Heart right ventricle (tissue), 16 donors: ENCODE measurements at regions of chr6 and their contacts with region 1.

Region 1: DNA sequence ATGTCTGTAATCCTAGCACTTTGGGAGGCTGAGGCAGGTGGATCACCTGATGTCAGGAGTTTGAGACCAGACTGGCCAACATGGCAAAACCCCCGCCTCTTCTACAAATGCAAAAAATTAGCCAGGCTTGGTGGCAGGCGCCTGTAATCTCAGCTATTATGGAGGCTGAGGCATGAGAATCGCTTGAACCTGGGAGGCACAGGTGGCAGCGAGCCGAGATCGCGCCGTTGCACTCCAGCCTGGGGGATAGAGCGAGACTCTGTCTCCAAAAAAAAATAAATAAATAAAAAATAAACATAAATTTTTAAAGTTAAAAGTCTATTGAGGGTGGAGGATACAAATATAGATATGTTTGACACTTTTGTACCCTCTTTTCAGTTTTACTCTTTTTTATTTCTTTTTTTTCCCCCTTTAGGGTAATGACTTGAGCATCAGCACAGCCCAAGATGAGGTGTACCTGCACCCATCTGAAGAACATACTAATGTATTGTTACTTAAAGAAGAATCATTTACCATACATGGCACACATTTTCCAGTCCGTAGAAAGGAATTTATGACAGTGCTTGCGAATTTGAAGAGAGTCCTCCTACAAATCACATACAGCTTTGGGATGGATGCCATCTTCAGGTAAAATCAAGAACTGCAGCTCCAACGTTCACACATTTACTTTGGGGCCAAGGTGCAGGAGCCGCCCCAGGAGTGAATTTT is 368.9 kb downstream of the LAMA2 start:
- DNase-seq: peak in 1 of 2 donors; percentile 48
- ATAC-seq: peak in 5 of 8 donors; percentile 6 to 60 (median 37)
- H3K4me3 ChIP-seq: no peak overlapping the region
- H3K27ac ChIP-seq: peak overlapping the region in 1 of 10 donors; percentile 13
- H3K4me1 ChIP-seq: peaks cover 3 to 52% (median 21%) of the 10 kb centered on the region in 9 donors
- H3K27me3 ChIP-seq: no peaks in the 10 kb centered on the region
- CTCF ChIP-seq: peak; percentile 58 to 79 (median 76)

Region 2: GRCh38 chr6:127737009-127737486 is 1514.8 kb before region 1 on chr6:
- intact Hi-C with region 1: loop called in 1 of 10 experiments (anchors 10 kb)
- DNase-seq: peak in 1 of 2 donors; percentile 41
- ATAC-seq: peak; percentile 58 to 76 (median 67)
- H3K4me3 ChIP-seq: no peak overlapping the region
- H3K27ac ChIP-seq: no peak overlapping the region
- H3K4me1 ChIP-seq: no peaks in the 10 kb centered on the region
- H3K27me3 ChIP-seq: no peaks in the 10 kb centered on the region
- CTCF ChIP-seq: peak in 8 of 9 donors; percentile 35 to 76 (median 70)

Region 3: DNA sequence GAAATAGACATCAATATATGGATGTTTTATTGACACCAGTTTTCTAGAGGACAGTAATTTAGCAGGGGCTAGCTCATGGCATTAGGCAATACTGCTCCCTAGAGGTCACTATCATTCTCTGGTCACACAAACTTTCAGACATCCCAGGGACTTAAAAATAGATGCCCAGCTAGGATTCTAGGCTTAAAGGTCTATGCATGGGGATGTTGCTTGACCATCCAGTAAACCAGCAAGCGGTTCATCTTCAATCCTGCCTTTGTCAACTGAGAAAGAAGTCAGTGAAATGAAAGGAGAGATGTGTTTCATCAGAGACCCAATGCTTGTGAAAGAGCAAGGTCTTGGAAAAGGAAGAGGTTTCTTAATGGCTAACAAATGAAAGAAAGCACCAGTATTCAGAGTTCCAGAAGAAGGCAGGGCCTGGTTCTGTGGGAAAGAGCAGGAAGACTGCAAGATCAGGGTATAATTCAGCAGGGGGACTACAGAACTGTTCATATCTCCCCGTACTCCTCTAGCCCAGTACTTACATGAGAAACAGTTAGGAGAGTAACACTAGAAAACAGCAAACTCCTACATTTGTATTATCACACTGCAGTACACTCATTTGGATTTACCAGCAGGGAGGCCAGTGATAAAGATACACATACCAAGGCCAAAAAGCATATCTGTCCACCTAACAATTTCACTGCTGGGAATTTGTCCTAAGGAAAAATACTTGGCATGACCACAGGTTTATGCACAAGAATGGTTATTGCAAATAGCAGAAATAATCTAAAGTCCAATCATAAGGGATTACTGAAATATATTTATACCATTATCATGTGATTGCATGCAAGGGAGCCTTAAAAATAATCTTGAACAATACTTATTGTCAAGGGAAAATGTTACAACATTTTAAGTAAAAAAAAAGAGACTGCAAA is 520.3 kb before region 1 on chr6:
- intact Hi-C with region 1: loop called in 3 of 10 experiments (anchors 10 kb)
- DNase-seq: no peak
- ATAC-seq: peak; percentile 47 to 87 (median 76)
- H3K4me3 ChIP-seq: no peak overlapping the region
- H3K27ac ChIP-seq: no peak overlapping the region
- H3K4me1 ChIP-seq: peaks cover 0 to 9% (median 0%) of the 10 kb centered on the region in 9 donors
- H3K27me3 ChIP-seq: no peaks in the 10 kb centered on the region
- CTCF ChIP-seq: peak; percentile 40 to 72 (median 63)

Region 4: GRCh38 chr6:128822271-128822670 is 429.6 kb before region 1 on chr6:
- intact Hi-C with region 1: loop called in 1 of 10 experiments (anchors 10 kb)
- DNase-seq: peak; percentile 12 to 29
- ATAC-seq: peak in 5 of 8 donors; percentile 15 to 52 (median 37)
- H3K4me3 ChIP-seq: no peak overlapping the region
- H3K27ac ChIP-seq: no peak overlapping the region
- H3K4me1 ChIP-seq: peaks cover 0 to 9% (median 6%) of the 10 kb centered on the region in 9 donors
- H3K27me3 ChIP-seq: no peaks in the 10 kb centered on the region
- CTCF ChIP-seq: no peak

Region 5: DNA sequence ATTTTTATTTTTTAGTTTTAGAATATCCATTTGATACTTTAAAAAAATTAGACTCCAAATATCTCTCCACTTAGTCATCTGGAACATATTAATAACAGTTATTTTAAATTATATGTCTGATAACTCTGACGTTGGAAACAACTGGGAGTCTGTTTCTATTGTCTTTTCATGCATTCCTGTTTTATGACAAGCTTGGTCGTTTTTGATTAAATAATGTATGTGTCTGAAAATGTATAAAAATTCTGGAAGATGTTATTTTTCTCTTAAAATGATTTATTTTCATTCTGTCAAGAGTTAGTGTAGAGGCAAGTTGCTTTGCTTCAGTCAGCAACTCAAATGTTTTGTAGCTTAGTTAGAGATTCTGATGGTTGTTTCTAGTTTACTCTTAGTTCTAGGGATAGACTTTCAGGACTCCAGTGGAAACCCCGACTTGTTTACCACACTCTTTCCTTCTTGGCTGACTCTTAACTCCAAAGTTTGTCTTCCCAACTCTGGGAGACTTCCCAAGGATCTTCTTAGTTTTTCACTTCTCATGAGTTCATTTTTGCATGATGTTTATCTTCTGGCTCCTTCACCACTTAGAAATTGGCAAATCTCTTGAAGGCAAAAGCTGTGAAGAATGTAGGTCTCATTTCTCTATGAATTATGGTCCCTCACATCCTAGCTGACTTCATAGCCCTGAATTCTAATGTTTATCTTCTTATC is 178.0 kb before region 1 on chr6:
- intact Hi-C with region 1: loop called in 1 of 10 experiments (anchors 10 kb)
- DNase-seq: no peak
- ATAC-seq: no peak
- H3K4me3 ChIP-seq: no peak overlapping the region
- H3K27ac ChIP-seq: peak overlapping the region in 4 of 10 donors; percentile 7 to 62 (median 20)
- H3K4me1 ChIP-seq: peaks cover 0 to 40% (median 8%) of the 10 kb centered on the region in 9 donors
- H3K27me3 ChIP-seq: no peaks in the 10 kb centered on the region
- CTCF ChIP-seq: no peak

Region 6: GRCh38 chr6:129575378-129576118 is 323.7 kb after region 1 on chr6:
- intact Hi-C with region 1: no loop called
- DNase-seq: peak in 1 of 2 donors; percentile 7
- ATAC-seq: peak; percentile 58 to 81 (median 72)
- H3K4me3 ChIP-seq: peak overlapping the region in 6 of 10 donors; percentile 16 to 42 (median 27)
- H3K27ac ChIP-seq: no peak overlapping the region
- H3K4me1 ChIP-seq: peaks cover 0 to 6% (median 0%) of the 10 kb centered on the region in 9 donors
- H3K27me3 ChIP-seq: no peaks in the 10 kb centered on the region
- CTCF ChIP-seq: peak; percentile 42 to 79 (median 72)